ENCODE measurements at regions of chr6 and their contacts with region 1.

Region 1: DNA sequence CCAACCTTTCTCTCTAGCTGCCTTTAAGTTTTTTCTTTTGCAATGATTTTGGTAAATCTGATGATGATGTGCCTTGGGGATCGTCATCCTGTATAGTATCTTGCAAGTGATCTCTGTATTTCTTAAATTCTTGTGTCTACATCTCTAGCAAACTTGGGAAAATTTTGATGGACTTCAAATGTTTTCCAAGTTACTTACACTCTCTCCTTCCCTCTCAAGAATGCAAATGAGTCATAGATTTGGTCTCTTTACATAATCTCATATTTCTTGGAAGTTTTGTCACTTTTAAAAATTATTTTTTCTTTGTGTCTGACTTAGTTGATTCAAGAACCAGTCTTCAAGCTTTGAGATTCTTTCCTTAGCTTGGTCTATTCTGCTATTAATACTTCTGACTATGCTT is 176.4 kb downstream of the TBC1D32 start:
- DNase-seq: no peak
- ATAC-seq: no peak
- H3K4me3 ChIP-seq: no peak overlapping the region
- H3K4me3 Mint-ChIP-seq: no peak overlapping the region
- H3K27ac ChIP-seq: no peak overlapping the region
- H3K27ac Mint-ChIP-seq: no peak overlapping the region
- H3K4me1 ChIP-seq: no peaks in the 10 kb centered on the region
- H3K4me1 Mint-ChIP-seq: no peaks in the 10 kb centered on the region
- H3K27me3 ChIP-seq: no peaks in the 10 kb centered on the region
- H3K27me3 Mint-ChIP-seq: no peaks in the 10 kb centered on the region
- CTCF ChIP-seq: no peak

Region 2: DNA sequence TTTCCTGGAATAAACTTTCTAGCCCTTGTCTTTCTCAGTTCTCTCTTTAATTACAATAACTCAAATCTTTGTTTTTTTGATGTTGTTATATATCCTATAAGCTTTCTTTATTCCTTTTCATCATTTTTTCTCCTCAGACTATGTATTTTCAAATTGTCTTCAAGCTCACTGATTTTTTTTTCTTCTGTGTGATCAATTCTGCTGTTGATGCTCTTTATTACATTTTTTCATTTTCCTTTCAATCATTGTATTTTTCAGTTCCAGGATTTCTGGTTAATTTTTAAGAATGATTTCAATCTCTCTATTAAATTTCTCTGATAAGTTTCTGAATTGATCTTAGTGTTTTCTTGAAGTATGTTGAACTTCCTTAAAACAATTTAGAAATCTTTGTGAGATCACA is 33.3 kb before region 1 on chr6:
- CTCF ChIA-PET with region 1: no interaction called
- POLR2A ChIA-PET with region 1: no interaction called
- intact Hi-C with region 1: loop called in 1 of 2 experiments (anchors 2 kb)
- DNase-seq: no peak
- ATAC-seq: no peak
- H3K4me3 ChIP-seq: no peak overlapping the region
- H3K4me3 Mint-ChIP-seq: no peak overlapping the region
- H3K27ac ChIP-seq: no peak overlapping the region
- H3K27ac Mint-ChIP-seq: no peak overlapping the region
- H3K4me1 ChIP-seq: no peaks in the 10 kb centered on the region
- H3K4me1 Mint-ChIP-seq: no peaks in the 10 kb centered on the region
- H3K27me3 ChIP-seq: no peaks in the 10 kb centered on the region
- H3K27me3 Mint-ChIP-seq: no peaks in the 10 kb centered on the region
- CTCF ChIP-seq: no peak

Region 3: DNA sequence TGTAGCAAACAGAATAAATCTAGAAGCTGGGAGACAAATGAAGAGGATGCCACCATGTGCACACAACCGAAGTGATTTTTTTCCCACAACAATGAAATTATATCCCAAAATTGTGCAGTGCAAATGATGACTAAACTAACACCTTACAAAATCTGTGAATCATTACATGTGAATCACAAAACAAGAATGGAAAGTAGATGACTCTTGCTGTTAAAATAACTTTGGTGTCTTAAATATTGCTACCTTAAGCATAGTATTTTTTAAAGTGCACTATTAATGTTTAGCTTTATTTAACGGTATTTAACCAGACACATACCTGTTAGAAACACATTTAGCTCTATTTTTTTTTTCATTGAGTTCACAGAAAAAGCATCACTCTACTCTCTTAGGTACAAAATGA is 14.4 kb before region 1 on chr6:
- CTCF ChIA-PET with region 1: no interaction called
- POLR2A ChIA-PET with region 1: no interaction called
- intact Hi-C with region 1: no loop called
- DNase-seq: no peak
- ATAC-seq: no peak
- H3K4me3 ChIP-seq: no peak overlapping the region
- H3K4me3 Mint-ChIP-seq: no peak overlapping the region
- H3K27ac ChIP-seq: no peak overlapping the region
- H3K27ac Mint-ChIP-seq: no peak overlapping the region
- H3K4me1 ChIP-seq: no peaks in the 10 kb centered on the region
- H3K4me1 Mint-ChIP-seq: no peaks in the 10 kb centered on the region
- H3K27me3 ChIP-seq: no peaks in the 10 kb centered on the region
- H3K27me3 Mint-ChIP-seq: no peaks in the 10 kb centered on the region
- CTCF ChIP-seq: no peak